Left cardiac atrium (tissue), 4 donors: ENCODE measurements at regions of chr16 and their contacts with region 1.

Region 1: GRCh38 chr16:87391950-87392822 is at the start of gene MAP1LC3B:
- DNase-seq: peak; percentile 96
- ATAC-seq: peak; percentile 92
- total RNA-seq, gene MAP1LC3B: 82.9 to 90.2 TPM

Region 2: DNA sequence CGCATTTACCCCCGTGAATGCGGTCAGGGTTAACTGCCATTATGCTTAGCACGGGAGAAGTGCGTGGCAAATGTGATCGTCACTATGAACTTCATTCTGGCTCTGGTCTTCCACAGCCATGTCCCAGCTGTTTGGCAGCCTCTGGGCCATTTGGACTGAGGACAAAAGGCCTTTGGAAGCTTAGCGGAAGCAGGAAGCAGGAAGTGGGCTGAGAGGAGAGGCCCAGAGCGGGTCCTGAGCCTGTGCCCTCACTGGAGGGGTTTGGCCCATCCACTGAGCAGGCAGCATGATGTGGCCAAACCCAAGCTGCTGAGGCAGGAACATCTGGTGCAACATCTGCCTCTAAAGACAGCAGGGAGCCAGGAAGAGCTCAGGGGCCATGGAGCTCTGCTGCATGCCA is 420.9 kb before region 1 on chr16:
- intact Hi-C with region 1: no loop called
- DNase-seq: no peak
- ATAC-seq: peak; percentile 13 to 15

Region 3: DNA sequence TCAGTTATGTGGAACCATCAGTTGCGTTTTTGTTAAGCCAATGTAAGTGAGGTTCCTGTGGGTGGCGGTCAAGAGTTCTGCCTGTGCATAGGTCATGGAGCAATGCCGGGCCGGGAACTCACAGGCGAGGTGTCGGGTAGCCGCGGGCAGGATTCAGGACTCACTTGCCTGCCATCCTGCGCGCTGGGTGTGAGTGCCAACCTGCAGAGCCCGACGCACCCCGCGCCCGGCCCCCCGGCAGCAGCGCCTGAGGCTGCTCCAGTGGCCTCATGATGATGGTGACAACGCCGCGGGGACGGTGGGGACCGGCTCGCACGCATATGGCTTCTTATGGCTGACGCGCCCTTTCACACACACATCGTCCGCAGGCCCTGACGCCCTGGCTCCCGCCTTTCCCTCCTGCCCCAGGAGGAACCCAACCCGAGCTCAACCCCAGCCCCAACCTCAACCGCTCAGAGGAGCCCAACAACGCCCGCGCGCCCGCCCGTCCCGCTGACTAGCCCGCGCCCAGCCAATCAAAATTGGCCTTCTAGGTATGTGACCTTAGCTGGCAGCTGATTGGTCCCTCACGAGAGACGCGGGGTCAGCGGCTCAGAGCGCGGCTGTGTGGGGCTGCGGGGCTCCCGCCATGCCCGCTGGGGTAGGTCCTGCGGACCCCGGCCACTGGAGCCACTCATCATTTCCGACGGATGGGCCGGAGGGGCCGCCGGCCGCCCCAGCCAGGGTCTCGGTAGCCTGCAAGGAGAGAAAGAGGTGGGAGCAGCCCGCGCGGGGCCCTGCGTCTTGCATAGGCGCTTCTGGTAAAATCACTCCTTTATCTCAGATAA is 75.0 kb before region 1 on chr16 and contains the start of gene C16orf95:
- intact Hi-C with region 1: loop called in 1 of 2 experiments (anchors 5 kb)
- DNase-seq: peak; percentile 96
- ATAC-seq: peak; percentile 98
- total RNA-seq, gene C16orf95: 3.2 to 3.4 TPM